Naive thymus-derived CD4-positive, alpha-beta T cell (primary cell): ENCODE measurements at regions of chr14 and their contacts with region 1.

Region 1: GRCh38 chr14:22900081-22900799 is 17.2 kb downstream of the REM2 start:
- DNase-seq: peak in 7 of 9 donors; percentile 41 to 72 (median 66)
- ATAC-seq: peak; percentile 94
- H3K4me3 ChIP-seq: no peak overlapping the region
- H3K4me3 Mint-ChIP-seq: no peak overlapping the region
- H3K27ac ChIP-seq: peak overlapping the region; percentile 15
- H3K27ac Mint-ChIP-seq: peak overlapping the region in 8 of 9 donors; percentile 0 to 58 (median 35)
- H3K4me1 ChIP-seq: peaks cover 0 to 4% of the 10 kb centered on the region in 2 donors
- H3K4me1 Mint-ChIP-seq: peaks cover 10 to 24% (median 15%) of the 10 kb centered on the region in 7 donors
- H3K27me3 ChIP-seq: no peaks in the 10 kb centered on the region
- H3K27me3 Mint-ChIP-seq: no peaks in the 10 kb centered on the region

Region 2: DNA sequence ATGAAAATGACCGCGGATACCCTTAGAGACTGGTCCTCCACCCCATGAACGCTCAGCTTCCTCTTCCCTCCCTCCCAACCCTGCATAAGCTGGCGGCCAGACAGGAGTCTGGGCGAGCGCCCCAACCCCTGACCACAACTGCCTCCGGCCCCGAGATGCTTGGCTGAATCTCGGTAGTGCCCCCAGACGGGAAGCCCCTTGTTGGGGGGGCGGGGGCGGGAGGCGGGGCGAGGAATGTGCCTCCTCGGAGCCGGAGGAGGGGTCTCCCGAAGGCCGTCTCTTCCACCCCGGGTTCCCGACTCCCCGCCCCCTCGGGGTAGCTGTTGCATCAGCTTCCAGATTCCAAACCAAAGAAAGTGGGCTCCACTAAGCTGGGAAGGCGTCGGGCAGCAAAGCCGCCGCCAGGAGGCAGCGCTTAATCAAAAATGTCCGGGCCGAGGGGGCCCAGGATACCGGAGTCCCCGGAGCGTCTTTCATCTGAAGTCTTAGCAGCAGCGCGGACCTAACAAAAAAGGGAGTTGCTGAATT is 77.6 kb before region 1 on chr14:
- CTCF ChIA-PET with region 1: interaction called, 20 read pairs
- POLR2A ChIA-PET with region 1: interaction called, 5 read pairs
- intact Hi-C with region 1: loop called (anchors 1 kb)
- DNase-seq: peak; percentile 50 to 71 (median 65)
- ATAC-seq: peak; percentile 83
- H3K4me3 ChIP-seq: peak overlapping the region; percentile 38
- H3K4me3 Mint-ChIP-seq: peak overlapping the region; percentile 47 to 78 (median 66)
- H3K27ac ChIP-seq: no peak overlapping the region
- H3K27ac Mint-ChIP-seq: peak overlapping the region in 3 of 9 donors; percentile 11 to 36 (median 22)
- H3K4me1 ChIP-seq: peaks cover 0 to 17% of the 10 kb centered on the region in 2 donors
- H3K4me1 Mint-ChIP-seq: peaks cover 6 to 37% (median 24%) of the 10 kb centered on the region in 7 donors
- H3K27me3 ChIP-seq: no peaks in the 10 kb centered on the region
- H3K27me3 Mint-ChIP-seq: peaks cover 0 to 16% (median 4%) of the 10 kb centered on the region in 5 donors

Region 3: DNA sequence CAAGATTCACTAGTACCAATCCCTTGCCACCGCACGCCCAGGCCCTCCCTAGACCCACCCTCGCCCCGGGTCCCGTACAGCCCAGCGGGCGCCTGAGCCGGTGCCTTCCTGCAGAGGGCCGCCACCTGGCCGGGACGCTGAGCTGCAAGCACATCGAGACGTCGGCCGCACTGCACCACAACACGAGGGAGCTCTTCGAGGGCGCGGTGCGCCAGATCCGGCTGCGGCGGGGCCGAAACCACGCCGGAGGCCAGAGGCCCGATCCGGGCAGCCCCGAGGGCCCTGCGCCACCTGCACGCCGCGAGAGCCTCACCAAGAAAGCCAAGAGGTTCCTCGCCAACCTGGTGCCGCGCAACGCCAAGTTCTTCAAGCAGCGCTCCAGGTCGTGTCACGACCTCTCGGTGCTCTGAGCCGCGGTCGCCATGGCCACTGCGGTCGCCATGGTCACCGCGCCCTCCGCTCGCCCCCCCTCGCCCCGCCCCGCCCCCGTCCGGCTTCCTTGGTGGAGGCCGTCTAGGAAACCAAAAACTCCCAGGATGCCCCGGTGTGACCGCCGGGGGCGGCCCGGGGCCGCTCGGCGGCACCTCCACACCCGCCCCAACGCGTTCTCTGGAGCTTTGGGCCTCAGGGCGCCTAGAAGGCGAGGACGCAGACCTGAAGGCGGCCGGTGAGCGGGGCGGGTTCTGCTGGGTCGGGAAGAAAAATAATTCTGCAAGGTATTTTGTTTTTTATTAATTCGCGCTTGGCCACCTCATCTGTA is 13.6 kb before region 1 on chr14:
- CTCF ChIA-PET with region 1: interaction called, 18 read pairs
- POLR2A ChIA-PET with region 1: interaction called, 9 read pairs
- intact Hi-C with region 1: loop called (anchors 1 kb)
- DNase-seq: peak; percentile 42 to 75 (median 69)
- ATAC-seq: peak; percentile 80
- H3K4me3 ChIP-seq: peak overlapping the region; percentile 77
- H3K4me3 Mint-ChIP-seq: peak overlapping the region; percentile 88 to 100 (median 92)
- H3K27ac ChIP-seq: peak overlapping the region; percentile 75
- H3K27ac Mint-ChIP-seq: peak overlapping the region; percentile 85 to 98 (median 96)
- H3K4me1 ChIP-seq: peaks cover 21 to 53% of the 10 kb centered on the region in 2 donors
- H3K4me1 Mint-ChIP-seq: peaks cover 39 to 80% (median 72%) of the 10 kb centered on the region in 7 donors
- H3K27me3 ChIP-seq: no peaks in the 10 kb centered on the region
- H3K27me3 Mint-ChIP-seq: peaks cover 0 to 21% (median 0%) of the 10 kb centered on the region in 5 donors